Panc1 (cell line): ENCODE measurements at regions of chr5 and their contacts with region 1.

Region 1: DNA sequence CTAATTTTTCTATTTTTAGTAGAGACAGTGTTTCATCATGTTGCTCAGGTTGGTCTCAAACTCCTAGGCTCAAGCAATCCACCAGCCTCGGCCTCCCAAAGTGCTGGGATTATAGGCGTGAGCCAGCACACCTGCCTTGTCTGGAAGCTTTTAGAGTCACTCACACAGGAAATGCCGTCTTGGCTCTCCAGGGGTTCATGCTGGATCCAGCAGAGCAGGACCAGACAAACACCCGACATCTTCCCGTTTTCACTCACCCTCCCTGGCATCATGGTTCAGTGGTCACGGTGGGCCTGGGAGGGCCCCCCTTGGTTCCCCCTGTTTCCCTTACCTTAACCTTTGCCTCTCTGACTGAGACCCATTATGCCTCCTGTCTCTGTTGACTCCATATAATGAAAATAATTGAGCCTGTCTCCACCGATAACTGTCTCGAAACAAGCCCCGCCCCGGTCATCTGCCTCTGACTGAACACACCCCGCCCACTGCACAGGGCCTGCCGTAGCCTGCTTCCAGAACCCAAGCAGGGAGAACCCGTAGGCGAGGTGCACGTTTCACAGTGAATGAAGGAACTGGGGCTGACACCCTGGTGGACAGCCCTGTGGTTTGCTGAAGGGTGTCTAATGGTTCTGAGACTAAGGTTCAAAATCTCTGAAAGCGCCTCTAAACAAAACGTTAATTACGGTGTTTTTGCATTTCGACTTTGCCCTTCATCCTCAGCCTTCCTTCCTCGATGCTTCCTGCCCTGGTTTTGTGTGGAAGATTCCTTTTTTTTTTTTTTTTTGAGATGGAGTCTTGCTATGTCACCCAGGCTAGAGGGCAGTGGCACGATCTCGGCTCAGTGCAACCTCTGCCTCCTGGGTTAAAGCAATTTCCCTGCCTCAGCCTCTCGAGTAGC is 39.7 kb upstream of the SPRY4 start:
- DNase-seq: peak; percentile 73
- ATAC-seq: peak; percentile 78
- H3K4me3 ChIP-seq: peak overlapping the region; percentile 31 to 69
- H3K27ac ChIP-seq: peak overlapping the region; percentile 99
- H3K4me1 ChIP-seq: peaks cover 66% of the 10 kb centered on the region
- H3K27me3 ChIP-seq: no peaks in the 10 kb centered on the region
- CTCF ChIP-seq: no peak

Region 2: GRCh38 chr5:142375944-142376411 is 11.5 kb after region 1 on chr5:
- CTCF ChIA-PET with region 1: no interaction called
- POLR2A ChIA-PET with region 1: interaction called, 12 read pairs
- in situ Hi-C with region 1: no loop called
- intact Hi-C with region 1: no loop called
- DNase-seq: no peak
- ATAC-seq: no peak
- H3K4me3 ChIP-seq: no peak overlapping the region
- H3K27ac ChIP-seq: no peak overlapping the region
- H3K4me1 ChIP-seq: no peaks in the 10 kb centered on the region
- H3K27me3 ChIP-seq: no peaks in the 10 kb centered on the region
- CTCF ChIP-seq: no peak